Prostate gland (tissue), 2 donors: ENCODE measurements at regions of chr5 and their contacts with region 1.

Region 1: GRCh38 chr5:121968910-121969607 is 7.3 kb downstream of the SRFBP1 start:
- DNase-seq: no peak
- H3K4me3 ChIP-seq: no peak overlapping the region
- H3K27ac ChIP-seq: peak overlapping the region in 1 of 2 donors; percentile 45
- H3K4me1 ChIP-seq: peaks cover 5% of the 10 kb centered on the region
- H3K27me3 ChIP-seq: no peaks in the 10 kb centered on the region
- CTCF ChIP-seq: no peak
- POLR2A ChIP-seq: no peak

Region 2: DNA sequence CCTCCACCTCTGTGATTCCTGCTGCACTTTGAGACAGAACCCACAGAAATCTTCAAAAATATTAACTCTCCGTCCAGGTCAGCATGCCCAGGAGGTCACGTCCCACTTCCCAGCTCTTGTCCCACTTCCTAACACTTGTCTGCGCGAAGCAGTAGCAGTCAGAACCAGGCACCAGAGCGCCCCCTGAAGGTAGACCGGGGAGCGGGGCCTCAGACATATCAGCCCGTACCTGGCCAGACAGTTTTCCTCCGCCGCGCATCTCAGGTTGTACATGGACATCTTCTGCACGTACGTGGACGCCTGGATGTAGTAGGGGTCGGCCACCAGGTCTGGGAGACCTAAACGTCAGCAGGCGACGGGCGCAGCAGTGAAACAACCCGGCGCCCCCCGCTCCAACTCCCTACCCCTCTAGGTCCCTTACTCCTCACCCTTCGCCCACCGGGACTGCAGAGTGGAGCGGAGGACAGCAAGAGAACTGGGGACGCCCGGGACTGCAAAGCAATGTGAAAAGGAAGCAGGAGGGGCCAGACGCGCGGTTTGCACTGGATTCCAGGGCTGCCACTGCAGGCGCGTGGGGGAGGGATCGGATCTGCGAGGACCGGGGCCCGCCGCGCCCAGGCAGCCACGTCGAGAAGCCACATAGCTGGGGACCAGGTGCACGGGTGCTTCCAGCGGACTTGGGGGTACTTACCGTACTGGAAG is 107.8 kb after region 1 on chr5:
- intact Hi-C with region 1: loop called (anchors 5 kb)
- DNase-seq: peak; percentile 79
- H3K4me3 ChIP-seq: peak overlapping the region; percentile 41 to 46
- H3K27ac ChIP-seq: peak overlapping the region in 1 of 2 donors; percentile 26
- H3K4me1 ChIP-seq: no peaks in the 10 kb centered on the region
- H3K27me3 ChIP-seq: no peaks in the 10 kb centered on the region
- CTCF ChIP-seq: peak; percentile 53 to 69 (median 62)
- POLR2A ChIP-seq: no peak

Region 3: DNA sequence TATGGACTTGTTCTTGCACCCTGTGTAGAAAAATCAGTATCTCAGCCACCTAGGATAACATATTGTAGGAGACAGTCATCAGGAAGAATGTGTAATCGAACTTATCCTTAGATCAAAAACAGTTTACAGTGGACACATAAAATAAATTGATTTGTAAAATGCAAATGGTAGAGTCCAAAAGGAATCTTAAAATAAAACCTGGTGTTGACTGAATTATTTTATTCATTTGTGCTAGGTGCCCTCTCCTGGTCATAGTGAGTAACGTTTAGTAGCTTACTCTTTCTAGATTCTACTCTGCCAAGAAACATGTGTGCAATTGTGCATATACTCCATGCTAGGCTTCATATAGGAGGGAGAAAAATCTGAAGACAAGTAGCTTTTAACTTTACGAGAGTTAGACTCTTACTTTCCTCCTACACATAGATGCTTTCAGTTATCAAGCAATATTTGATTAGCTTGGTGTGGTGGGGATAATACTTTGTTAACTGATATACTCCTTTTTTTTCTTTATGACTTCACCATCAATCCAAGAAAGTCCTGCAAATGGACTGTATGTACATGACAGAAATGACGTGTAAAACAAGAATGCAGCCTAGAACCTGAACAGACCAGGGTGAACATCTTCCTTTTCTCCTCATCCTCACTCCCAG is 132.7 kb after region 1 on chr5:
- intact Hi-C with region 1: loop called (anchors 5 kb)
- DNase-seq: peak; percentile 18
- H3K4me3 ChIP-seq: no peak overlapping the region
- H3K27ac ChIP-seq: no peak overlapping the region
- H3K4me1 ChIP-seq: no peaks in the 10 kb centered on the region
- H3K27me3 ChIP-seq: no peaks in the 10 kb centered on the region
- CTCF ChIP-seq: peak in 3 of 4 experiments; percentile 62 to 66 (median 66)
- POLR2A ChIP-seq: no peak

Region 4: GRCh38 chr5:122156724-122157325 is 187.8 kb after region 1 on chr5:
- intact Hi-C with region 1: loop called (anchors 10 kb)
- DNase-seq: no peak
- H3K4me3 ChIP-seq: no peak overlapping the region
- H3K27ac ChIP-seq: no peak overlapping the region
- H3K4me1 ChIP-seq: no peaks in the 10 kb centered on the region
- H3K27me3 ChIP-seq: no peaks in the 10 kb centered on the region
- CTCF ChIP-seq: peak in 3 of 4 experiments; percentile 34 to 53 (median 40)
- POLR2A ChIP-seq: no peak